ENCODE measurements at regions of chr1 and their contacts with region 1.

Region 1: DNA sequence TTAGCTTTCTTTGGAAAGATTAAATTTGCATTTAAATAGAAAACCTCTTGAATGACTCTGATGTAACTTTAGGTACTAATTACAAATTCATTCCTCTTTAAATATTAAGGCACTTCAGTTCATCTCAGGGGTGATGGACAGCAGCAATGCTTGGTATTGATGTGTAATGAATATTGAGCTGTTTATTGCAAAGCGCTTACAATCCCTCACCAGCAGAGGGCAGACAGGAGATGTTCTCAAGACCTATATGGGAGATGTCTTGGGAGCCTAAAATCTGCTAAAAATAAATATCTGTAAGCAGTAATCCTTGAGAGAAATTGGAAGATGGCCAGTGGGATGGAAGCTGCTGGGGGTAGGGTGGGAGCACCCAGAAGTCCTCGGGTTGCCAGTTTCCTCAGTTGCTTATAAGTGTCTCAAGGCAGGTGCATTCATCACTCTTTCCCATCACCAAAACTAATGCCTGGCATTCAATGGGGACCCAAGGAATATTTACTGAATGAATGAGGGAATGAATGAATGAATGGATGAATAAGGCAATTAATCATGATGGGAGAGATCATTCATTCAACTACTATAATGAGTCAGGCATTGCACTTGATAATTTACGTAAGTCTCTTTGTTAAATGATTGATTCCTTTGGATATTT is 2.3 kb downstream of the KLHDC8A start:
- DNase-seq: peak; percentile 56
- H3K4me3 ChIP-seq: no peak overlapping the region
- H3K27ac ChIP-seq: no peak overlapping the region
- H3K27me3 ChIP-seq: peaks cover 17% of the 10 kb centered on the region
- CTCF ChIP-seq: peak; percentile 94

Region 2: DNA sequence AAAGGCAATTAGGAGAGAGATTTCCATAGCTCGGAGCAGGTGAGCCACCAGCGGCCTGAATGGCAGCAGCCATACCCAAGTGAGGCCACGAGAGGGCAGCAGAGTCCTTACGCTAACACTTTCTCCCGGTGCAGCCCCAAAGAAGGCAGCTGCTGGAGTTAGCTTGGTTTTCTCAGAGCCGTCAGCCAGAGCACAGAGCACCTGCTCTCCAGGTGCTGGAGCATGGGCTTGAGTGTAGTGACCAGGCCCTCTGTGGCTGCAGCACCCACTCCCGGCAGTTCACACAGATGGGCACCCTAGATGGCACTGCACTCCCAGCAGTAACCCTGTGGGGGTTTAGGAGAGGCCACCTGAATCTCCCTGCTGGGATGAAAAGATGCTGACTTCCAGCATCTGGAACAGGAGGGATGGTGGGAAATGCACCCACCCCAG is 80.8 kb before region 1 on chr1:
- CTCF ChIA-PET with region 1: interaction called, 40 read pairs
- POLR2A ChIA-PET with region 1: no interaction called
- DNase-seq: no peak
- H3K4me3 ChIP-seq: no peak overlapping the region
- H3K27ac ChIP-seq: no peak overlapping the region
- H3K27me3 ChIP-seq: no peaks in the 10 kb centered on the region
- CTCF ChIP-seq: peak; percentile 97

Region 3: GRCh38 chr1:205335643-205336091 is 18.7 kb before region 1 on chr1:
- CTCF ChIA-PET with region 1: interaction called, 54 read pairs
- POLR2A ChIA-PET with region 1: no interaction called
- DNase-seq: no peak
- H3K4me3 ChIP-seq: no peak overlapping the region
- H3K27ac ChIP-seq: no peak overlapping the region
- H3K27me3 ChIP-seq: peaks cover 41% of the 10 kb centered on the region
- CTCF ChIP-seq: peak; percentile 98

Region 4: GRCh38 chr1:205381305-205381704 is 26.9 kb after region 1 on chr1:
- CTCF ChIA-PET with region 1: interaction called, 28 read pairs
- POLR2A ChIA-PET with region 1: no interaction called
- DNase-seq: no peak
- H3K4me3 ChIP-seq: no peak overlapping the region
- H3K27ac ChIP-seq: no peak overlapping the region
- H3K27me3 ChIP-seq: peaks cover 5% of the 10 kb centered on the region
- CTCF ChIP-seq: no peak

Region 5: GRCh38 chr1:205421798-205422197 is 67.4 kb after region 1 on chr1 and contains the start of gene LEMD1:
- CTCF ChIA-PET with region 1: interaction called, 12 read pairs
- POLR2A ChIA-PET with region 1: no interaction called
- DNase-seq: no peak
- H3K4me3 ChIP-seq: no peak within 1 kb of the TSS
- H3K27ac ChIP-seq: no peak within 1 kb of the TSS
- H3K27me3 ChIP-seq: peaks cover 72% of the 10 kb centered on the region
- CTCF ChIP-seq: no peak
- polyA plus RNA-seq, gene LEMD1: not detected in 2 replicates

Region 6: GRCh38 chr1:205485338-205486228 is 131.2 kb after region 1 on chr1:
- CTCF ChIA-PET with region 1: interaction called, 165 read pairs
- POLR2A ChIA-PET with region 1: interaction called, 3 read pairs
- DNase-seq: no peak
- H3K4me3 ChIP-seq: no peak overlapping the region
- H3K27ac ChIP-seq: no peak overlapping the region
- H3K27me3 ChIP-seq: peaks cover 50% of the 10 kb centered on the region
- CTCF ChIP-seq: peak; percentile 93